Right ventricle myocardium superior (tissue), 1 donor: ENCODE measurements at regions of chr1 and their contacts with region 1.

Region 1: GRCh38 chr1:36150296-36151132 is 1.2 kb upstream of the TRAPPC3 start:
- DNase-seq: peak; percentile 95
- ATAC-seq: peak; percentile 79

Region 2: GRCh38 chr1:36223993-36224536 is 73.6 kb after region 1 on chr1 and contains the start of gene THRAP3:
- intact Hi-C with region 1: loop called (anchors 10 kb)
- DNase-seq: peak; percentile 100
- ATAC-seq: peak; percentile 96
- total RNA-seq, gene THRAP3: 57.6 TPM